Heart left ventricle (tissue), 16 donors: ENCODE measurements at regions of chr4 and their contacts with region 1.

Region 1: DNA sequence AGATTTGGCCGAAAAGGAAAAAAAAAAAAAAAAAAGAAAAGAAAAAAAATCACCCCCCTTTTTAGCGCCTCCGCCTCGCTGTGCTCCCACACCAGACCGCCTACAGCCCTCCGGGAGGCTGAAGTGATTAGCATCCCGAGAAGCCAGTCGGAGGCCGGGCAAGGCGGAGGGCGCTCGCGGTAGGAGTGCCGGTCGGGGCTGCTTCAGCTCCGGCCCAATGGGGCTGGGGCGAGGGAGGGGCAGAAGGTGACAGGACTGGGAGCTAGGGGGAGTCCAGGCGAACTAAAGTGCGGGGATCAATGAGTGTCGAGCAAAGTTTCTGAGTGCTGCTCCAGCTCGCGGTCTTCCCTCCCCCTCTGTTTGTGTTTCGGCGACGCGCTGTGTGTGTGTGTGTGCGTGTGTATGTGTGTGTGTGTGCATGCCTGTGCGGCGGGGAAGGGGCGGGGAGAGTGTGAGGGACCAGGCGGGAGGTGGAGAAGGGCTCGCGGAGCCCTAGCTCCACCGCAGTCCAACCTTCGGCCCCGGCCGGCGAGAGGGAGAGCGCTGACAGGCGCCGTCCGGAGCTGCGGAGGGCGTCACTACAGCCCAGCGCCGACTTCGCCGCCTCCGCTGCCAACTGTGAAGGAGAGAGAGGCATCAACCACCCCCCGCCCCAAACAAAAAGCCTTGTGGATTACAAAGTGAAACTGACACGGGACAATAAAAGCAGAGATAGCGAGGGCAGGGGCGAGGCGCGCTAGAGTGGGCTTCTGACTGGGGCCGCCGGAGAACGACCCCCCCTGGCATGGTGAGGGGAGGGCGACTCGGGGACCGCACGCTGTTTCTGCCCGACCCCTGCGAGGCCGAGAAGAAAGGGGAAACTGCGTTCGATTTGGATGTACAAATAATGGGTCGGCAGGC is at the start of gene FAT4:
- DNase-seq: peak; percentile 96 to 98 (median 98)
- ATAC-seq: peak; percentile 93 to 97 (median 96)
- H3K4me3 ChIP-seq: peak within 1 kb of the TSS; percentile 67 to 97 (median 82)
- H3K27ac ChIP-seq: peak within 1 kb of the TSS; percentile 87 to 96 (median 92)
- H3K4me1 ChIP-seq: peaks cover 0 to 38% (median 28%) of the 10 kb centered on the region in 12 donors
- H3K27me3 ChIP-seq: peaks cover 0 to 35% (median 0%) of the 10 kb centered on the region in 9 donors
- CTCF ChIP-seq: peak in 10 of 12 donors; percentile 14 to 57 (median 26)
- POLR2A ChIP-seq: peak; percentile 40 to 89
- total RNA-seq, gene FAT4: 5.3 to 16.3 (median 11.8) TPM

Region 2: GRCh38 chr4:125397226-125397625 is 82.3 kb after region 1 on chr4:
- intact Hi-C with region 1: loop called in 5 of 10 experiments (anchors 5 to 10 kb)
- DNase-seq: no peak
- ATAC-seq: no peak
- H3K4me3 ChIP-seq: no peak overlapping the region
- H3K27ac ChIP-seq: peak overlapping the region in 3 of 12 donors; percentile 1 to 30 (median 16)
- H3K4me1 ChIP-seq: peaks cover 0 to 74% (median 17%) of the 10 kb centered on the region in 12 donors
- H3K27me3 ChIP-seq: no peaks in the 10 kb centered on the region
- CTCF ChIP-seq: no peak
- POLR2A ChIP-seq: no peak

Region 3: DNA sequence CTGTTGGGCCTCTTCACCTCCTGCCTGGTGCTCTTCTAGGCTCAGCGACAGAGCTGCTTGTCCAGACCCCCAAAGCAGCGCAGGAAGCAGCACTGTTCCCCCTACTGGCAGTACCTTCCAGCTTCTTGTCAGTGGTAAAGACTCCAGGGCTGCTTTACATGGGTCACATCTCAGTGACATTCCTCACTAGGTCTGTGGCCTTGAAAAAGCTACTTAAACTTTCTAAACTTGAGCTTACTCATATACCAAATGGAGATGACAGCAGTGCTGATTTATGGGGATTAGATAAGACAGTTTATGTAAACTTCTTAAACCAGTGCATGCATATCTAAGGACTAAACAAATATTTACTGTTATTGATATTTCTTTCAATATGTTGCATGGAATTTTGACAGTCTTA is 117.2 kb after region 1 on chr4:
- intact Hi-C with region 1: loop called in 9 of 10 experiments (anchors 1 to 10 kb)
- DNase-seq: peak in 2 of 5 donors; percentile 27 to 36
- ATAC-seq: peak; percentile 61 to 86 (median 78)
- H3K4me3 ChIP-seq: no peak overlapping the region
- H3K27ac ChIP-seq: no peak overlapping the region
- H3K4me1 ChIP-seq: peaks cover 0 to 18% (median 0%) of the 10 kb centered on the region in 12 donors
- H3K27me3 ChIP-seq: no peaks in the 10 kb centered on the region
- CTCF ChIP-seq: peak in 9 of 12 donors; percentile 27 to 51 (median 40)
- POLR2A ChIP-seq: no peak

Region 4: GRCh38 chr4:125741825-125742452 is 427.0 kb after region 1 on chr4:
- intact Hi-C with region 1: loop called in 9 of 10 experiments (anchors 1 to 5 kb)
- DNase-seq: no peak
- ATAC-seq: no peak
- H3K4me3 ChIP-seq: no peak overlapping the region
- H3K27ac ChIP-seq: no peak overlapping the region
- H3K4me1 ChIP-seq: peaks cover 0 to 21% (median 9%) of the 10 kb centered on the region in 12 donors
- H3K27me3 ChIP-seq: no peaks in the 10 kb centered on the region
- CTCF ChIP-seq: peak; percentile 42 to 70 (median 60)
- POLR2A ChIP-seq: no peak

Region 5: DNA sequence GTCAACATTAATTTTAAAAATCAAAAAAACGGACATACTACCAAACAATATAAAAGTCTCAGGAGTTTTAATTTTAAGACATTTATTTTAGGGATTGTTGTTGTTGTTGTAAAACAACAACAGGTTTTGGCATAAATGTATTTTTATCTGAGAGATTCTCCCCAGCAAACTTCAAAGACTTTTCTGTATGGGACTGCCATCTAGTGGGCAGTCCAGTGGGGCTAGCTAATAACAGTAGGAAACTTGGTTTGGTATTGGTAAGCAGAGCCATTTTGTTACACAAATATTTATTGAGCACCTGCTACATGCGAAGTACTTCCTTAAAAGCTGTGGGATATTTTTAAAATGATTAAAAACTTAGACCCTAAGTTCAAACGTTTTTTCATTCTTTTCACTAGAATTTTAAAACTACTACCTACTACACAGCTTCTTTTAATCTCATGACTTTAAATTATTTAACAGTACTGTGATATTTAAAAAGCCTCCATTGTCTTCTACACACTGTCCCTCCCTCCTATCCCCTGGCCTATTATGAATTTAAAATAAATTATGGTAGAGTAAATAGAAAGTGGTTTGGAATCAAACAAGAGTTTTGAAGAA is 1289.4 kb after region 1 on chr4:
- intact Hi-C with region 1: loop called in 6 of 10 experiments (anchors 5 to 10 kb)
- DNase-seq: peak in 1 of 5 donors; percentile 37
- ATAC-seq: peak in 1 of 4 donors; percentile 68
- H3K4me3 ChIP-seq: no peak overlapping the region
- H3K27ac ChIP-seq: no peak overlapping the region
- H3K4me1 ChIP-seq: no peaks in the 10 kb centered on the region
- H3K27me3 ChIP-seq: no peaks in the 10 kb centered on the region
- CTCF ChIP-seq: peak; percentile 39 to 73 (median 60)
- POLR2A ChIP-seq: no peak